Uterus (tissue), 4 donors: ENCODE measurements at regions of chr4 and their contacts with region 1.

Region 1: GRCh38 chr4:145732895-145733880 is 53.2 kb downstream of the C4orf51 start:
- DNase-seq: peak; percentile 95 to 97
- H3K4me3 ChIP-seq: peak overlapping the region; percentile 33 to 65
- H3K27ac ChIP-seq: peak overlapping the region; percentile 94 to 98
- H3K4me1 ChIP-seq: peaks cover 0 to 17% of the 10 kb centered on the region in 2 donors
- H3K27me3 ChIP-seq: no peaks in the 10 kb centered on the region
- CTCF ChIP-seq: peak in 2 of 4 experiments; percentile 9 to 20
- POLR2A ChIP-seq: peak; percentile 72 to 95

Region 2: DNA sequence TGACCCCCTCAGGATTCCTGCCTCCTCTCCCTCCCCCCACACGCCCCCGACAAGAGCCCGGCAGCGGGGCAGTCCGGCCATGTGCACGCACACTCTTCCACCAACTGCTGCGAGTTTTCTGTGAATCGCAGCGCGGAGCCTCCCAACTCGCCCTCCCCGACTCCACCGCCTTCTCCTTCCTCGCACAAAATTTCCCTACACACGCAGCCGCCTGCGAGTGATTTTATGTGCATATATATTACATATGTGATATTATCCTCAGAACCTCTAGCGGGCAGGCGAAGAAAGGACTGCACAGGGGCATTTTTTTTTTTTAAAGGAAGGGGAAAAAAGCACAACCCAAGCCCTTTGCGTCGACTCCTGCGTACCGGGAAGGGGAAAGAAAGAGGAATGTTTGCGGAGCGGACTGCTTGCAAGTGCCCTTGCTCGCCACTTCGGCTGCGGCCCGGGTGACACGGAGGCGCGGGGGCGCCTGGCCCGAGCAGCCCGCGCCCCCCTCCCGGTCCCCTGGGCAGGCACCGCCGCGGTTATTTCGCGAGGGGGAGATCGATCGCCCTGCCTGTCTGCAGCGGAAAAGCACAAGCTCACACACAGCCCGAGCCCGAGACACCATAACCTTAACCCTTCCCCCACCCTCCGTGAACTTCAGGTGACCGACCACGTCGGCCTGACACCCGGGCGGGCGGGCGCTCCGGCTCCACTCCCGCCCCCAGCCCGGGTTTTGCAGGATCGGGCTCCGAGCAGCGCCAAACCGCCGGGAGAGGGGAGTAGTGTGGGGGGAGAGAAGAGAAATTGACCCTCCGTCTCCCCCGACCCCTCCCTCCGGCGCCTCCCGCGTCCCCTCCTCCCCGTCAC is 203.2 kb after region 1 on chr4:
- intact Hi-C with region 1: loop called (anchors 5 kb)
- DNase-seq: peak; percentile 59 to 73
- H3K4me3 ChIP-seq: peak overlapping the region; percentile 71 to 89
- H3K27ac ChIP-seq: peak overlapping the region; percentile 98 to 99
- H3K4me1 ChIP-seq: peaks cover 0 to 4% of the 10 kb centered on the region in 2 donors
- H3K27me3 ChIP-seq: no peaks in the 10 kb centered on the region
- CTCF ChIP-seq: peak in 2 of 4 experiments; percentile 4 to 24
- POLR2A ChIP-seq: peak in 1 of 2 donors; percentile 25